PC-3 (cell line): ENCODE measurements at regions of chr5 and their contacts with region 1.

Region 1: DNA sequence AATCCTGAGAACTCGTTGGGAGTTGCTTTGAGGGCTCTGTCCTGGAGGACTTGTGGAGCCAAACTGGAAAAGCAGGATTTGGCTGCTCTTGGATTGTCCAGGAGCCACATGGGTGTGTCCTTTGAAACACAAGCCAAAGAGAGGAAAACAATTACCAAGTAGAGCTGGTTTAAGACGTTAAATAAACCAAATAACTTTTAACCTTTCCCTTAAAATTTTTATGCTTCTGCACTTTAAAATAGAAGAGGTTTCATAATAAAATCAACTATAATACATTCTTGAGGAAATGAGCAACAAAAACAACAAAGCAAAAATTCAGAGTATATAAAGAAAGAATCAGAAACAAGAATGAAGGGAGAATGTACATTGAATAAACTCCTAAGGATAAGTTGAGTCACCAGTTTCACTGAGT is 13.5 kb downstream of the C5orf46 start:
- DNase-seq: peak; percentile 99
- ATAC-seq: peak; percentile 78
- H3K4me3 ChIP-seq: no peak overlapping the region
- H3K27ac ChIP-seq: peak overlapping the region; percentile 97
- H3K4me1 ChIP-seq: peaks cover 93% of the 10 kb centered on the region
- H3K27me3 ChIP-seq: no peaks in the 10 kb centered on the region
- CTCF ChIP-seq: no peak

Region 2: GRCh38 chr5:146986469-146986868 is 906.4 kb before region 1 on chr5:
- CTCF ChIA-PET with region 1: no interaction called
- POLR2A ChIA-PET with region 1: no interaction called
- intact Hi-C with region 1: no loop called
- DNase-seq: no peak
- ATAC-seq: no peak
- H3K4me3 ChIP-seq: no peak overlapping the region
- H3K27ac ChIP-seq: no peak overlapping the region
- H3K4me1 ChIP-seq: no peaks in the 10 kb centered on the region
- H3K27me3 ChIP-seq: no peaks in the 10 kb centered on the region
- CTCF ChIP-seq: no peak

Region 3: GRCh38 chr5:147835386-147835798 is 57.4 kb before region 1 on chr5:
- CTCF ChIA-PET with region 1: no interaction called
- POLR2A ChIA-PET with region 1: no interaction called
- intact Hi-C with region 1: loop called (anchors 2 kb)
- DNase-seq: peak; percentile 97
- ATAC-seq: peak; percentile 98
- H3K4me3 ChIP-seq: no peak overlapping the region
- H3K27ac ChIP-seq: peak overlapping the region; percentile 12
- H3K4me1 ChIP-seq: peaks cover 23% of the 10 kb centered on the region
- H3K27me3 ChIP-seq: no peaks in the 10 kb centered on the region
- CTCF ChIP-seq: no peak

Region 4: GRCh38 chr5:147845618-147846017 is 47.2 kb before region 1 on chr5:
- CTCF ChIA-PET with region 1: no interaction called
- POLR2A ChIA-PET with region 1: no interaction called
- intact Hi-C with region 1: no loop called
- DNase-seq: no peak
- ATAC-seq: no peak
- H3K4me3 ChIP-seq: no peak overlapping the region
- H3K27ac ChIP-seq: no peak overlapping the region
- H3K4me1 ChIP-seq: no peaks in the 10 kb centered on the region
- H3K27me3 ChIP-seq: no peaks in the 10 kb centered on the region
- CTCF ChIP-seq: no peak

Region 5: DNA sequence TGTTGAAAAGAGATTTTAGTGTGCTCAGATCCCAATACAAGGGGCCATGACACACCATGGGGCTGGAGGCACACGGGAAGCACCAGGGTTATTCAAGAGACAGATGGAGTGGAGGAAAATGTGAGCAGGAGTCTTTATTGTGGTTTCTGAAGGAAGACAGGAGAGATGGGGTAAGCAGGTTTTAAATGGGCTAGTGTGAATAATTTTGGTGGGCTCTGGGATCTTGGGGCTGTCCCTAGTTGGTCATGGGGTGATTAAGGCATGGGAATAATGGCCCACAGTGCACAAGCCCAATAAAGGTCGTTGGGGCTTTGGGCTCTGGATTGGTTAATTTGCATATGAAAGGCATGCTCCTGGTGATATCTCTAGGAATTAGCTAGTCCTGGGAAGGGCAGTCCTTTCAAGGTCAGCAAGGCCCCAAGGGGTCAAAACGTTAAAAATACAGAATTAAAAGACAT is 17.9 kb before region 1 on chr5:
- CTCF ChIA-PET with region 1: no interaction called
- POLR2A ChIA-PET with region 1: no interaction called
- intact Hi-C with region 1: no loop called
- DNase-seq: no peak
- ATAC-seq: no peak
- H3K4me3 ChIP-seq: peak overlapping the region; percentile 19; the same call in 1 of the 2 replicates
- H3K27ac ChIP-seq: peak overlapping the region; percentile 80
- H3K4me1 ChIP-seq: peaks cover 16% of the 10 kb centered on the region
- H3K27me3 ChIP-seq: no peaks in the 10 kb centered on the region
- CTCF ChIP-seq: no peak

Region 6: GRCh38 chr5:147918101-147918685 is 25.4 kb after region 1 on chr5:
- CTCF ChIA-PET with region 1: no interaction called
- POLR2A ChIA-PET with region 1: interaction called, 17 read pairs
- intact Hi-C with region 1: loop called (anchors 1 kb)
- DNase-seq: peak; percentile 94
- ATAC-seq: peak; percentile 73
- H3K4me3 ChIP-seq: peak overlapping the region; percentile 52; the same call in 1 of the 2 replicates
- H3K27ac ChIP-seq: peak overlapping the region; percentile 97
- H3K4me1 ChIP-seq: peaks cover 72% of the 10 kb centered on the region
- H3K27me3 ChIP-seq: no peaks in the 10 kb centered on the region
- CTCF ChIP-seq: no peak

Region 7: DNA sequence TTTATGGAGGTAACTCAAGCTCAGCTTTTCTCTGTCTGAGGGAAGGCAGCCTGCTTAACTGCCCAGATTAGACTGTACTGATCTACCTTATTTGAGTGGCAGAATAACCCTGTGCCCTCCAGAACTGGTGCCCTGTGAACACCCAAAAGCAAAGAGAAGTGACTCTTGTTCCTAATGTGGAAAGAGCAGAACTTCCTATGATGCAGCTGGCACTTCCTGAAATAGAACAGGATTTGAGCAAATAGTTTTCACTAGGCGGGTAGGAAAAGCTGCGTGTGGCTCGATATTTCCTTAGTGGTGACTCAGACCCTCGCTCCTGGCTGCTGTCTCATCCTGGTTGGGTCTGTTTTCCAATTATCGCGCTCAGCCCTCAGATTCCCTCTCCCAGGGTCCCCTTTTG is 1080.1 kb after region 1 on chr5:
- CTCF ChIA-PET with region 1: no interaction called
- POLR2A ChIA-PET with region 1: no interaction called
- intact Hi-C with region 1: loop called (anchors 10 kb)
- DNase-seq: peak; percentile 100
- ATAC-seq: peak; percentile 78
- H3K4me3 ChIP-seq: peak overlapping the region; percentile 17; the same call in 1 of the 2 replicates
- H3K27ac ChIP-seq: peak overlapping the region; percentile 90
- H3K4me1 ChIP-seq: peaks cover 83% of the 10 kb centered on the region
- H3K27me3 ChIP-seq: no peaks in the 10 kb centered on the region
- CTCF ChIP-seq: no peak